ENCODE measurements at regions of chr18 and their contacts with region 1.

Region 1: GRCh38 chr18:45384137-45384961 is 230.9 kb upstream of the SLC14A2 start:
- DNase-seq: peak; percentile 38
- CTCF ChIP-seq: peak; percentile 71

Region 2: DNA sequence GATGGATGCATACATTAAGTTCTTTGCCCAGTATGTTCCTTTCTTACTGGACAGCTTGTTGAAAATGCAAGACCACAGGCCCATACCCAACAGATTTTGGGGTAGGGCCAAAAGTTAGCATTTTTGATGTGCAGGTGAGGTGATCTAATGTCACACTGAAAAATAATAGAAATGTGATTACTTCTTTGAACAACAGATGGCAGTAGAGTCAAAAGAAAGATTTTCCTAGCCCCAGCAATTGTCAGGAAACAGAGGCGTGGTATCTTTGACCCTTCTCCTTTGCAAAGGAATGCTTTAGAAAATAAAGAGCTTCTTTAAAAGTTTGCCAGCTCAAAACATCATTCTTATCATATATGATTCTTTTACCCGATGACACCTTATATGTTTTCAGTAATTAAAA is 1763.4 kb before region 1 on chr18:
- in situ Hi-C with region 1: loop called (anchors 25 kb)
- DNase-seq: peak; percentile 30
- CTCF ChIP-seq: peak; percentile 49

Region 3: DNA sequence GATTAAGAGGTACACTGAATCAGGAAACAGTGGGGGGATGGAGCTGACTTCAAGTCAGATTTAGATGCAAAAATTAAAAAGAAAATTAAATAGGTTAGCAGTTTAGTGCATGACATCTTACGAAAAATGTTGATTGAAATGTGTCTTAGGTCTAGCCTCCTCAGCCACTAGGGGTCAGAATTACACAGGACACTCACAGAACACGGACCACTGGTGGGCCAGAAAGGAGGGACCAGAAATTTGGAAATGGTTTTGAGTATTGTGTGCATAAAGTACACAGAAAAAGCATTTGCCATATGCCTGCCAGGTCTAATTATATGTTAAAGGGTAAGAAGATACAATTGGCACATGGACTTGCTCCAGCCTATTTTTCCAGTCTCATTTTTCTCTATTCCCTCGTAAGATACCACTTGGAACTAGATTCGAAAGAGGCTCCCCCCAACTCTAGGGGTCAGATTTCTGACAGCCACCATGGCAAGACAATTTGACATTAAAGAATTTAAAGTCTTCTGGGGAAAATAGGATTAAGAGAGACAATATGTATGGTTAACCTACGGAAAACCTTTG is 1253.9 kb before region 1 on chr18:
- in situ Hi-C with region 1: loop called (anchors 25 kb)
- DNase-seq: peak; percentile 45
- CTCF ChIP-seq: peak; percentile 69